Mammary epithelial cell (primary cell): ENCODE measurements at regions of chr6 and their contacts with region 1.

Region 1: DNA sequence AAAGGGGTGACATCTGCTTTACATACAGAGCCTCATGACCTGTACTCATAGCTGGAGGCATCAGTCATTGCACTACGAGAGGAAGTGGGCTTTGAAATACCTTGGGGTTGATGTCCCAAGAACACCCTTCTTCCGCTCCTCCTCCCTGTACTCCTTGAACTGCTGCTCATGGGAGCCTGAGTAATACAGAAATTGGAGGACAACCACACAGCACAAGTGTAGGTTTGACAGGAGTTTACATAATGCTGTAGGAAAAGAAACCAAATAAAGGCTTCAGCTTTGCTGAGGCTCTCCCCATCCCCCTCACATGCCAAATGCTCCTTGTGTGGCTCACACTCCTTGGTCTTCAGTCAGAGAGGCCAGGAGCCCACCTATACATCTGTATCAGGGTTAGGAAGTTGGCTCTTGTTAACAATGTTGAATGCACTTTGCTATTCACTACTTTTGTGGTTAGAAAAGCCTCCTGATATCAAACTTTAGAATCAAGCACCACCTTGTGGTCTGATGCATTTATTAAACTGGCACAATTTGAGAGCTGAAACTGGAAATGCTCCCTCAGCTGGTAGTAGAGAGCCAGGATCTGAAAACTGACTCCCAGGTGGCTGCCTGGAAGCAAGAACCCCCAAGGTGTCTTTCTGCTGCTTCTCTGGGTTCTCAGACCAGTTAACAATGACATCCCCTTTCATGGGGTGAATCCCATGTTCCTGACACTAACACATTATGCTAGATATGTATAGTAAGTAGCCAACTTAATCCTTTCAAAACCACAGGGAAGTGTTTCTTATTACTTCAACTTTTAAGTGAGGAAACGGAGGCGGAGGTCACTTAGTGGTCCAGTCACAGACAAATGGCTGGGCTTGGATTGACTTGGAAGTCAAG is 56.2 kb upstream of the EDN1 start:
- DNase-seq: peak; percentile 82
- H3K4me3 ChIP-seq: no peak overlapping the region
- H3K27ac ChIP-seq: no peak overlapping the region
- H3K4me1 ChIP-seq: peaks cover 5% of the 10 kb centered on the region
- H3K27me3 ChIP-seq: no peaks in the 10 kb centered on the region
- CTCF ChIP-seq: peak; percentile 74 to 84

Region 2: DNA sequence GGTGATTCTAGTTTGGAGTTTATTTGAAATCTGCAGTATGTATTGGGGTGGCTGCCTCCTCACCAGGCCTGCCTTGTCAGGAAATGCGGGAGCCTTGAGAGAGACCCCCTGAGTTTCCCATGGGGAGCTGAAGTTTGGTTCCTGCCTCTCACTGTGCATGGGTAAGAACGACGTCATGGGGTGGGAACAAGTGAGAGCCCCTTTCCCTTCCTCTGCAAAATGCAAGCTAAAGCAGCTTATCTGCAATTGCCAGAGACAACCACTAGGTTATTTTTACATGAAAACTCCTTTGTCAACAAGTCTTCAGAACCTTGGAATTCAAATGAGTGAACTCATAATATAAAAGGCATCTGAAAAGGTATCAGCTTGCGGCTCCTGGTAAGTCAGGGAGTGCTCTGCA is 638.0 kb before region 1 on chr6:
- CTCF ChIA-PET with region 1: no interaction called
- dilution Hi-C with region 1: no loop called
- in situ Hi-C with region 1: loop called in 1 of 2 experiments (anchors 10 kb)
- intact Hi-C with region 1: no loop called
- DNase-seq: no peak
- H3K4me3 ChIP-seq: no peak overlapping the region
- H3K27ac ChIP-seq: no peak overlapping the region
- H3K4me1 ChIP-seq: no peaks in the 10 kb centered on the region
- H3K27me3 ChIP-seq: no peaks in the 10 kb centered on the region
- CTCF ChIP-seq: peak; percentile 9 to 40

Region 3: DNA sequence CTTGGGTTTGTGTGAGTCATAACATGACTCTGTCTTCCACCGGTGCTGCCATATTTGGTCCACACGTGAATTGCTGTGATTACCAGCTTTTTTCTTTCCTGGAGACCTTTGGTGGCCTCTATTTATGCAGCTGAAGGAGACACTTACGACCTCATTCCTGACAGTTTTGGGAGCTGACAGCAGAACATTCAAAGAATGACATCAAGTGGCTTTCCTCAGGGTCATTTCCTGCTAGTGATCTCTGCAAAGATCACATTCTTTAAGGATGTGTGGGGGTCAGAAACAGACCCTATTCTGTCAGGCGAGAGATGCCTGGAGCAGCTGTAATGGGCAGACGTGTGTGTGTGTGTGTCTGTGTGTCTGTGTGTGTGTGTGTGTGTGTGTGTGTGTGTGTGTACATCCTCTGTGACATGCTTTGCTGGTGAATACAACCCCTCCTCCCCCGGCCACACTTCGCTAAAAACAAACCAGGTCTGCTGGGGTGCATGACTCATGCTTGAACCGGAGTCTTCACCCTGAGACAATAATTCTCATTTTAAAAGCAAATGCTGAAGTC is 580.8 kb before region 1 on chr6:
- CTCF ChIA-PET with region 1: interaction called, 4 read pairs
- dilution Hi-C with region 1: no loop called
- in situ Hi-C with region 1: loop called (anchors 5 to 10 kb)
- intact Hi-C with region 1: loop called (anchors 1 kb)
- DNase-seq: peak; percentile 60
- H3K4me3 ChIP-seq: no peak overlapping the region
- H3K27ac ChIP-seq: no peak overlapping the region
- H3K4me1 ChIP-seq: peaks cover 8% of the 10 kb centered on the region
- H3K27me3 ChIP-seq: no peaks in the 10 kb centered on the region
- CTCF ChIP-seq: no peak

Region 4: DNA sequence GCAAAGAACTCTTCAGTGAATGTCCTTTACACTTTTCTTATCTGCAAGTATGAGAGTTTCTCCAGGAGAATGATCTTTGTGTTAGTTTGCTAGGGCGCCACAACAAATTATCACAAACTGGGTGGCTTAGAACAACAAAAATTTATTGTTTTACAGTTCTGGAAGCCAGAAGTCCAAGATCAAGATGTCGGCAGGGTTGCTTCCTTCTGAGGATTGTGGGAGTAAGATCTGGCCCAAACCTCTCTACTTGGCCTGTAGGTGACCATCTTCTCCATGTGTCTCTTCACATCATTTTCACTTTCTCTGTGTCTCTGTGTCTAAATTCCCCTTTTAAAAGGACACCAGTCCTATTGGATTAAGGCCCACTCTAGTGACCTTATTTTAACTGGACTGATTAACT is 558.3 kb before region 1 on chr6:
- CTCF ChIA-PET with region 1: no interaction called
- dilution Hi-C with region 1: no loop called
- in situ Hi-C with region 1: no loop called
- intact Hi-C with region 1: loop called (anchors 5 kb)
- DNase-seq: peak; percentile 42
- H3K4me3 ChIP-seq: no peak overlapping the region
- H3K27ac ChIP-seq: no peak overlapping the region
- H3K4me1 ChIP-seq: no peaks in the 10 kb centered on the region
- H3K27me3 ChIP-seq: no peaks in the 10 kb centered on the region
- CTCF ChIP-seq: no peak

Region 5: DNA sequence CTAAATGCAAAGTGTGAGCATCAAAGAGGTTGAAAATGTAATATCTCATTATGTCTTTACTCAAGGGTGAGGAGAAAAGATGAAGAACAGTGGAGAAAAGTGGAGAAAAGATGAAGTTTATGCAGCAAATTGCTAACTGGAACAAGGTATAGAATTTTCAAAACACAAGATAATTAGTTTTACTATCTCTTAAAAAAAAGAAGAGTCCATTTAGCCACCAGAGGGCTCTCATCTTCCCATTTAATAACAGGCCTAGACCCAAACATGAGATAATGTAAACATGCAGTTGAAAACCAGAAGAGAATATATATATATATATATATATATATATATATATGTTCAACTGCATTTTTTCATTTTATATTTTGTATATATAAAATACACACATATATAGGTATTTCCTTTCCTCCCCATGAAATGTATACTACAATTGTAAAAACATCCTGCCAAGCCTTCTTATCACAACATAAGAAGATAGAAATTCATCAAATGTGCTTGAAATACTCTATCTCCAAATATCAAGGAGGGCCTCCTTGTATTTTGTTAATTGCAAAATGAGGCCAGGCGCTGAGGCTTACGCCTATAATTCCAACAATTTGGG is 533.7 kb before region 1 on chr6:
- CTCF ChIA-PET with region 1: interaction called, 12 read pairs
- dilution Hi-C with region 1: no loop called
- in situ Hi-C with region 1: no loop called
- intact Hi-C with region 1: loop called (anchors 1 kb)
- DNase-seq: peak; percentile 29
- H3K4me3 ChIP-seq: no peak overlapping the region
- H3K27ac ChIP-seq: no peak overlapping the region
- H3K4me1 ChIP-seq: peaks cover 14% of the 10 kb centered on the region
- H3K27me3 ChIP-seq: no peaks in the 10 kb centered on the region
- CTCF ChIP-seq: peak; percentile 23 to 58

Region 6: GRCh38 chr6:12150812-12151432 is 83.0 kb before region 1 on chr6:
- CTCF ChIA-PET with region 1: no interaction called
- dilution Hi-C with region 1: no loop called
- in situ Hi-C with region 1: no loop called
- intact Hi-C with region 1: loop called (anchors 1 kb)
- DNase-seq: no peak
- H3K4me3 ChIP-seq: no peak overlapping the region
- H3K27ac ChIP-seq: no peak overlapping the region
- H3K4me1 ChIP-seq: peaks cover 13% of the 10 kb centered on the region
- H3K27me3 ChIP-seq: no peaks in the 10 kb centered on the region
- CTCF ChIP-seq: peak; percentile 56 to 81

Region 7: GRCh38 chr6:12844290-12845223 is 610.6 kb after region 1 on chr6:
- CTCF ChIA-PET with region 1: no interaction called
- dilution Hi-C with region 1: no loop called
- in situ Hi-C with region 1: no loop called
- intact Hi-C with region 1: no loop called
- DNase-seq: no peak
- H3K4me3 ChIP-seq: no peak overlapping the region
- H3K27ac ChIP-seq: no peak overlapping the region
- H3K4me1 ChIP-seq: no peaks in the 10 kb centered on the region
- H3K27me3 ChIP-seq: peaks cover 2% of the 10 kb centered on the region
- CTCF ChIP-seq: peak; percentile 42 to 59